Adrenal gland (tissue), 19 donors: ENCODE measurements at regions of chr15 and their contacts with region 1.

Region 1: GRCh38 chr15:65192016-65192415 is 6.9 kb upstream of the CLPX start:
- DNase-seq: peak in 1 of 7 donors; percentile 23
- H3K4me3 ChIP-seq: no peak overlapping the region
- H3K27ac ChIP-seq: no peak overlapping the region
- H3K4me1 ChIP-seq: no peaks in the 10 kb centered on the region
- H3K27me3 ChIP-seq: no peaks in the 10 kb centered on the region
- CTCF ChIP-seq: no peak
- POLR2A ChIP-seq: no peak

Region 2: GRCh38 chr15:65264863-65265430 is 72.9 kb after region 1 on chr15:
- intact Hi-C with region 1: loop called (anchors 5 kb)
- DNase-seq: no peak
- H3K4me3 ChIP-seq: no peak overlapping the region
- H3K27ac ChIP-seq: no peak overlapping the region
- H3K4me1 ChIP-seq: no peaks in the 10 kb centered on the region
- H3K27me3 ChIP-seq: no peaks in the 10 kb centered on the region
- CTCF ChIP-seq: no peak
- POLR2A ChIP-seq: no peak